ENCODE measurements at regions of chr9 and their contacts with region 1.

Region 1: GRCh38 chr9:70406434-70406862 is 8.0 kb downstream of the KLF9 start:
- DNase-seq: peak; percentile 72 to 85 (median 82)
- H3K4me3 ChIP-seq: peak overlapping the region; percentile 14 to 74 (median 69)
- H3K4me3 Mint-ChIP-seq: peak overlapping the region; percentile 74 to 89
- H3K27ac ChIP-seq: peak overlapping the region; percentile 54 to 88
- H3K27ac Mint-ChIP-seq: peak overlapping the region; percentile 84 to 97 (median 96)
- H3K4me1 ChIP-seq: peaks cover 42 to 43% of the 10 kb centered on the region in 2 donors
- H3K4me1 Mint-ChIP-seq: peaks cover 54% of the 10 kb centered on the region
- H3K27me3 ChIP-seq: no peaks in the 10 kb centered on the region
- H3K27me3 Mint-ChIP-seq: no peaks in the 10 kb centered on the region
- CTCF ChIP-seq: no peak

Region 2: DNA sequence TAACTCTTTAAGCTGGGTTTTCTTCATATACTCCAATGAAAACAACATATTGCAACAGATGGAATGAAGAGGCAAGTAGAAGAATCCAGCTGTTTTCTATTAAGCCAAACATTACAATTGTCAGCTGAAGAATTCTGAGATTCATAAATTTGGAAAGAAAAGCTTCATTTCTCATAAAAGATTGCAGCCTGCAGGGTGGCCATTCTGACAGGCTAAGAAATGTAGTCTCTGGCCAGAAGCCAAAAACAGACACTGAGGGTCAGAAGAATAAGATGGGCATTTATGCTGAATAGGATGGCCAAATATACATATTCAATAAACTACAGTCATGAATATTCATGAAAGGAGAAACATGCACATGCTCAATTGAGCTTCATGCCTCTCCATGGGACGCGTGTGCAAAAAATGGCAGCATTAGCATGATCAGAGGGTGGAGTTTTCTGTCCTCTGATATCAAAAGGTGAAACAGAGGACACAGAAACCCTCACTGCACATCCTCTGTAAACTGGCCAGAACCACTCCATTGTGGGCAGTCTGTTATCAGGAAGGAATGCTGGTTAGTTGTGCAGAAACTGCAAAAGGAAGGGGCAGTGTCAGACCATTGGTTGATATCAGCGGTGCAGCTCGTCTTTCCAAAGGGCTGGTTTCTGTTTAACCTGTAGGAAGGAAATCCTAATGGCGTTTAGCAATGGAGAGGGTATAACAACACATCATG is 1320.7 kb before region 1 on chr9:
- intact Hi-C with region 1: no loop called
- DNase-seq: no peak
- H3K4me3 ChIP-seq: no peak overlapping the region
- H3K4me3 Mint-ChIP-seq: no peak overlapping the region
- H3K27ac ChIP-seq: no peak overlapping the region
- H3K27ac Mint-ChIP-seq: no peak overlapping the region
- H3K4me1 ChIP-seq: no peaks in the 10 kb centered on the region
- H3K4me1 Mint-ChIP-seq: no peaks in the 10 kb centered on the region
- H3K27me3 ChIP-seq: no peaks in the 10 kb centered on the region
- H3K27me3 Mint-ChIP-seq: peaks cover 0 to 2% (median 1%) of the 10 kb centered on the region in 3 donors
- CTCF ChIP-seq: no peak

Region 3: GRCh38 chr9:70060883-70061507 is 345.5 kb before region 1 on chr9:
- intact Hi-C with region 1: no loop called
- DNase-seq: peak; percentile 36 to 60 (median 38)
- H3K4me3 ChIP-seq: no peak overlapping the region
- H3K4me3 Mint-ChIP-seq: no peak overlapping the region
- H3K27ac ChIP-seq: no peak overlapping the region
- H3K27ac Mint-ChIP-seq: peak overlapping the region in 6 of 7 donors; percentile 16 to 79 (median 34)
- H3K4me1 ChIP-seq: peaks cover 5 to 9% of the 10 kb centered on the region in 2 donors
- H3K4me1 Mint-ChIP-seq: peaks cover 18% of the 10 kb centered on the region
- H3K27me3 ChIP-seq: no peaks in the 10 kb centered on the region
- H3K27me3 Mint-ChIP-seq: no peaks in the 10 kb centered on the region
- CTCF ChIP-seq: no peak

Region 4: DNA sequence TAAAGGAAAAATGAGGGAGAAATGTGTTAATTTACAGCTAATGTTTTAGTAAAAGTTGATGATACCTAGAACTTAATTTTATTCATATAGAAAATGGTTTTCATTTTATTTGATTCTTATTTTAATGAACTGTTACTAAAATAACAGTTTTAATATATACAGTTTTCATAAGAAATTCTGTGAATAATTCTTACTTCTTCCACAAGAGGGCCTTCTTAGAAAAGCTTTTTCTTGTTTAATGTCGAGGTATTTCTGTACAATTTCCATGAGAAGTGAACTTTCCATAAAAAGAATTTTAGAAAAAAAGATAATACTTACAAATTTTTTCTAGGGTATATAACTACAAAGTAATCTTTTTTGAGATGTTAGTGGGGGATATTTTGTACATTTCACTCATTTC is 65.9 kb before region 1 on chr9:
- intact Hi-C with region 1: loop called in 1 of 2 experiments (anchors 10 kb)
- DNase-seq: peak in 1 of 3 donors; percentile 29
- H3K4me3 ChIP-seq: no peak overlapping the region
- H3K4me3 Mint-ChIP-seq: no peak overlapping the region
- H3K27ac ChIP-seq: no peak overlapping the region
- H3K27ac Mint-ChIP-seq: no peak overlapping the region
- H3K4me1 ChIP-seq: no peaks in the 10 kb centered on the region
- H3K4me1 Mint-ChIP-seq: no peaks in the 10 kb centered on the region
- H3K27me3 ChIP-seq: no peaks in the 10 kb centered on the region
- H3K27me3 Mint-ChIP-seq: peaks cover 0 to 2% (median 0%) of the 10 kb centered on the region in 3 donors
- CTCF ChIP-seq: peak; percentile 64

Region 5: GRCh38 chr9:70438341-70438928 is 32.0 kb after region 1 on chr9:
- intact Hi-C with region 1: loop called in 1 of 2 experiments (anchors 5 kb)
- DNase-seq: peak in 2 of 3 donors; percentile 40 to 47
- H3K4me3 ChIP-seq: no peak overlapping the region
- H3K4me3 Mint-ChIP-seq: peak overlapping the region in 1 of 2 donors; percentile 19
- H3K27ac ChIP-seq: peak overlapping the region in 1 of 2 donors; percentile 11
- H3K27ac Mint-ChIP-seq: peak overlapping the region in 2 of 7 donors; percentile 2 to 26
- H3K4me1 ChIP-seq: peaks cover 8 to 13% of the 10 kb centered on the region in 2 donors
- H3K4me1 Mint-ChIP-seq: peaks cover 10% of the 10 kb centered on the region
- H3K27me3 ChIP-seq: no peaks in the 10 kb centered on the region
- H3K27me3 Mint-ChIP-seq: peaks cover 0 to 1% (median 0%) of the 10 kb centered on the region in 3 donors
- CTCF ChIP-seq: no peak

Region 6: DNA sequence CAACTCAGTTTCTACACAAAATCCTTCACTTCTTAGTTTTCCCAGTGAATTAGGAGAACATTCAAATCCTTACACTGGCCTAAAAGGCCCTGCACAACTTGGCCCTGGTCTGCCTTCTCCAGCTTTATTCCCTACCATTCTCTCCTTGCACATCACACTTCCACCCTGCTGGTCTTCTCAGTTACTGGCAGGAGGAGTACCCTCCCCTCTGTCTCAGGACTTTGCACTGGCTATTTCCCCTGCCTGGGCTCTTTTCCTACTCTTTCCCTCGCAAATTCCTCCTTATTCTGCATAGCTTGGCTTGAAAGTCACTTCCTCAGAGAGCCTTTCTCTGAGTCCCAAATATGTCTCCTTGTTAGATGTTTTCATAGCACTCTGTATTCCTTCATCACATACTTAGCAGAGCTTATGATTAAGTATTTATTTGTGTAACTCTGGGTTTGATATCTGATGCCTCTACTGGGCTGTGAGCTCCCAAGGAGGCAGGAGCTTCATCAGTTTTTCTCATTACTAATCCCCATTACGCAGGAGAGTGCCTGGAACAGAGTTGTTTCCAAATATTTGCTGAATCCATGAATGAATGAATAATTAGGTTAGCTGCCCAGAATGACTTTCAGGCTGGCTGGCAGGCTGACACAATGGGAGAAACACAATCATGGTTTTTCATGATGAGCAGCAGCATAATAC is 167.8 kb after region 1 on chr9:
- intact Hi-C with region 1: no loop called
- DNase-seq: no peak
- H3K4me3 ChIP-seq: no peak overlapping the region
- H3K4me3 Mint-ChIP-seq: no peak overlapping the region
- H3K27ac ChIP-seq: no peak overlapping the region
- H3K27ac Mint-ChIP-seq: peak overlapping the region in 1 of 7 donors; percentile 52
- H3K4me1 ChIP-seq: peaks cover 13 to 15% of the 10 kb centered on the region in 2 donors
- H3K4me1 Mint-ChIP-seq: peaks cover 23% of the 10 kb centered on the region
- H3K27me3 ChIP-seq: no peaks in the 10 kb centered on the region
- H3K27me3 Mint-ChIP-seq: peaks cover 0 to 1% (median 0%) of the 10 kb centered on the region in 3 donors
- CTCF ChIP-seq: no peak

Region 7: GRCh38 chr9:70679845-70680244 is 273.4 kb after region 1 on chr9:
- intact Hi-C with region 1: no loop called
- DNase-seq: no peak
- H3K4me3 ChIP-seq: no peak overlapping the region
- H3K4me3 Mint-ChIP-seq: no peak overlapping the region
- H3K27ac ChIP-seq: no peak overlapping the region
- H3K27ac Mint-ChIP-seq: no peak overlapping the region
- H3K4me1 ChIP-seq: no peaks in the 10 kb centered on the region
- H3K4me1 Mint-ChIP-seq: no peaks in the 10 kb centered on the region
- H3K27me3 ChIP-seq: no peaks in the 10 kb centered on the region
- H3K27me3 Mint-ChIP-seq: peaks cover 1 to 2% (median 1%) of the 10 kb centered on the region in 3 donors
- CTCF ChIP-seq: no peak

Measured in CD14-positive monocyte (primary cell).